ENCODE measurements at regions of chr16 and their contacts with region 1.

Region 1: DNA sequence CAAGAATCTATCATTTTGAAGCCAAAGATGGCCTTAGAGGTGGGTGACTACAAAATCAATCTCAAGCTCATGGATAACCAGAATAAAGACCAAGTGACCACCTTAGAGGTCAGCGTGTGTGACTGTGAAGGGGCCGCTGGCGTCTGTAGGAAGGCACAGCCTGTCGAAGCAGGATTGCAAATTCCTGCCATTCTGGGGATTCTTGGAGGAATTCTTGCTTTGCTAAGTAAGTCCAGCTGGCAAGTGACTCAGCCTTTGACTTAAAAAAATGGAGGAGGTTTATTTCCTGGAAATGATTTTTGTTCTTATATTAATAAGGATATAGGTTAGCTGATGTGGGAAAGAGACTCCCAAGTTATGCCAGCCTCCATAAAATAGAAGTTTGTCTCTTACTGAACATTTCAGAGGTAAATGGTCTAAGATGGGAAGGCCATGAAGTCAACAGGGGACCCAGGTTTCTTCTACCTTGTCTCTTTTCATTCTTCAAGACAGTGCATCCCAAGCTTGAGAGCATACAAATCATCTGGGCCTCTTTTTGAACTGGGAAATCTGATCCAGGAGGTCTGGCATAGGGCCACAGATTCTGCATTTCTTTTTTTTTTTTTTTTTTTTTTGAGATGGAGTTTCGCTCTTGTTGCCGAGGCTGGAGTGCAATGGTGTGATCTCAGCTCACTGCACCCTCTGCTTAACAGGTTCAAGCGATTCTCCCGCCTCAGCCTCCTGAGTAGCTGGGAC is 19.8 kb upstream of the TANGO6 start:
- DNase-seq: no peak

Region 2: GRCh38 chr16:68802190-68802589 is 21.4 kb before region 1 on chr16:
- CTCF ChIA-PET with region 1: no interaction called
- POLR2A ChIA-PET with region 1: no interaction called
- DNase-seq: no peak

Region 3: DNA sequence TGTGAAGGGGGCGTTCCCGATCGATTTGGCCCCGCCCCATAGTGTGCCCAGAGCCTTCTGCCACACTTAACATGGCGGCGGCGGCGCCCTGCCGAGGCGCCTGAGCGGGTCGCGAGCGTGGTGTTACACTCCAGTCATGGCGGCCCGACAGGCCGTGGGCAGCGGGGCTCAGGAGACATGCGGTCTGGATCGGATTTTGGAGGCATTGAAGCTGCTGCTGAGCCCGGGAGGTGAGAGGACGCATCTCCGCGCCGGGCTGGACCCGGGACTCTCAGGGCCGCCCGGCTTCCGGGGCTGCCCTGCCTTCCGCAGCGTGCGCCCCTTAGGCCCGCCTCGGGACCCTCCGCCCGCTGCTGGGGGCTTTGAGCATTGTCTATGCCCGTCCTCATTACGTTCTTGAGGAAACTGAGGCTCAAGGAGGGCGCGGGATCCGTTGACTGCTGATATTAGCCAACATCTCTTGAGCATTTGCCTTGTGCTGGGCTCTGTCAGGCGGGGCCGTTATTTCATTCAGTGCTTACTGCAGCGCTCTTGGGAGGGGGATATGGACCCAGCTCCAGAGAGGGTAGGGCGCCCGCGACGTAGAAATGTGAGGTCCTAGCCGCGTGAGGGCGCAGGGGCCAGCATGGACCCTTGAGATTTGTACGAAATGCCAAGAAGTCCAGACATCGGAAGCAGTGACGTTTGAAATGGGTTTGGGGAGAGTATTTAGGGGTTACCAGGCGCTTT is 20.1 kb after region 1 on chr16 and contains the start of gene TANGO6:
- CTCF ChIA-PET with region 1: no interaction called
- POLR2A ChIA-PET with region 1: interaction called, 11 read pairs
- DNase-seq: peak; percentile 88